ENCODE measurements at regions of chr17 and their contacts with region 1.

Region 1: GRCh38 chr17:44587339-44587738 is 30.1 kb downstream of the FZD2 start:
- DNase-seq: peak; percentile 82 to 88
- H3K4me3 ChIP-seq: no peak overlapping the region
- H3K4me3 Mint-ChIP-seq: peak overlapping the region; percentile 43
- H3K27ac Mint-ChIP-seq: peak overlapping the region; percentile 84
- H3K4me1 ChIP-seq: peaks cover 33% of the 10 kb centered on the region
- H3K4me1 Mint-ChIP-seq: peaks cover 33% of the 10 kb centered on the region
- H3K27me3 ChIP-seq: no peaks in the 10 kb centered on the region
- H3K27me3 Mint-ChIP-seq: no peaks in the 10 kb centered on the region
- CTCF ChIP-seq: no peak

Region 2: DNA sequence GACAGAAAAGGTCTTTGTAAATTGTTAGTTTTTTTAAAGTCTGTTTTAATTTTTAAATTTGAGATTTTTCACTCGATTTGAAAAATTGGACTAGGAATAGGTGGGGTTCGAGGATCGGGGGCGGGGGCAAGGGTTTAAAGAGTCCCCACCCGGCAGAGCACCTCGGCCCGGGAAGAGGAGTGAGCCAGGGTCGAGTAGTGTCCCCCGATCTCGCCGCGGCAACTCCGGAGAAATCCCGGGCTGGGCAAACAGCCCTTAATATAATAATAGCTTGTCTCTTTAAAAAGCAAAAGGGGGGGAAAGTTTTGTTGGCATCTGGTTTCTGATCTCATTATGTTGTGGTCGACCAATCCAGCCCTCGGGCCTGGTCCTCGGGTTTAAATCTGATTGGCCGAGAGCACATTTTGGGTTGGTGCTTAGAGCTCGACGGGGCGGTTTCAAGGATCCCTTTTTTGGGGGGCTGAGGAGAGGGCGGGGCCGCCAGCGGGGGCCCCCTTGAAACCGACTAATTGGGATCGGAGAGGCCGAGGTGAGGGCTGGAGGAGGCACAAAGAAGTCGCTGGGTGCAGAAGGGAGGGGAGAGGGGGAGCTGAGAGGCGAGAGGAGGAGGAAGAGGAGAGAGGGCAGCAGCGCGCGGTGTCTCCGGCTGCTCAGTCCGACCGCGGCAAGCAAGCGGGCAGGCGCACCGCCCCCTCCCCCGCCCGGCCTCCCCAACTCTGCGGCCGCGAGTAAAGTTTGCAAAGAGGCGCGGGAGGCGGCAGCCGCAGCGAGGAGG is 30.3 kb before region 1 on chr17 and contains the start of gene FZD2:
- CTCF ChIA-PET with region 1: no interaction called
- POLR2A ChIA-PET with region 1: interaction called, 12 read pairs
- intact Hi-C with region 1: no loop called
- DNase-seq: peak; percentile 89 to 93
- H3K4me3 ChIP-seq: peak within 1 kb of the TSS; percentile 61
- H3K4me3 Mint-ChIP-seq: peak within 1 kb of the TSS; percentile 93
- H3K27ac Mint-ChIP-seq: peak within 1 kb of the TSS; percentile 97
- H3K4me1 ChIP-seq: peaks cover 52% of the 10 kb centered on the region
- H3K4me1 Mint-ChIP-seq: peaks cover 33% of the 10 kb centered on the region
- H3K27me3 ChIP-seq: no peaks in the 10 kb centered on the region
- H3K27me3 Mint-ChIP-seq: no peaks in the 10 kb centered on the region
- CTCF ChIP-seq: no peak
- total RNA-seq, gene FZD2: 36.4 and 39.5 TPM in 2 replicates

Region 3: DNA sequence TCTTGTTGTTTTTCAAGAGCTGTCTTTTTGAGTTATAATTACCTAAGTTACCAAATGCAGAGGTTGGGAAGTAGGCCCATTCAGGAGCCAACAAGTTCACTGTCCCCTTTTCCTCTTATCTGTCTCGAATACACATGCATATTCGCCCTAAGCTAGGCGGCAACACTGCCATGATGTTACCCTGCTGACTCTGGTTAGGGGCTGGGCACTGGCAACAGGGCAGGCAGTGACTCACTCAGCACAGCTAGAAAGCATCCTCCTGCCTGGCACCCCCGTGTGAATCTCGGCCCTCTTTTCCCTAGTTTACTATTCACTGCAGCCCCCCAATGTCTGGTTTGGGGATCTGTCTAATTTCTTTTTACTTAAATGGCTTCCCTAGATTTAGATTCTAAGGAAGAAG is 134.9 kb after region 1 on chr17:
- CTCF ChIA-PET with region 1: no interaction called
- POLR2A ChIA-PET with region 1: no interaction called
- intact Hi-C with region 1: no loop called
- DNase-seq: no peak
- H3K4me3 ChIP-seq: no peak overlapping the region
- H3K4me3 Mint-ChIP-seq: no peak overlapping the region
- H3K27ac Mint-ChIP-seq: no peak overlapping the region
- H3K4me1 ChIP-seq: no peaks in the 10 kb centered on the region
- H3K4me1 Mint-ChIP-seq: no peaks in the 10 kb centered on the region
- H3K27me3 ChIP-seq: no peaks in the 10 kb centered on the region
- H3K27me3 Mint-ChIP-seq: no peaks in the 10 kb centered on the region
- CTCF ChIP-seq: no peak

Region 4: GRCh38 chr17:44749076-44749979 is 162.0 kb after region 1 on chr17:
- CTCF ChIA-PET with region 1: no interaction called
- POLR2A ChIA-PET with region 1: no interaction called
- intact Hi-C with region 1: no loop called
- DNase-seq: no peak
- H3K4me3 ChIP-seq: no peak overlapping the region
- H3K4me3 Mint-ChIP-seq: no peak overlapping the region
- H3K27ac Mint-ChIP-seq: no peak overlapping the region
- H3K4me1 ChIP-seq: no peaks in the 10 kb centered on the region
- H3K4me1 Mint-ChIP-seq: no peaks in the 10 kb centered on the region
- H3K27me3 ChIP-seq: no peaks in the 10 kb centered on the region
- H3K27me3 Mint-ChIP-seq: no peaks in the 10 kb centered on the region
- CTCF ChIP-seq: no peak

Measured in Caco-2 (cell line).